ENCODE measurements at regions of chr2 and their contacts with region 1.

Region 1: DNA sequence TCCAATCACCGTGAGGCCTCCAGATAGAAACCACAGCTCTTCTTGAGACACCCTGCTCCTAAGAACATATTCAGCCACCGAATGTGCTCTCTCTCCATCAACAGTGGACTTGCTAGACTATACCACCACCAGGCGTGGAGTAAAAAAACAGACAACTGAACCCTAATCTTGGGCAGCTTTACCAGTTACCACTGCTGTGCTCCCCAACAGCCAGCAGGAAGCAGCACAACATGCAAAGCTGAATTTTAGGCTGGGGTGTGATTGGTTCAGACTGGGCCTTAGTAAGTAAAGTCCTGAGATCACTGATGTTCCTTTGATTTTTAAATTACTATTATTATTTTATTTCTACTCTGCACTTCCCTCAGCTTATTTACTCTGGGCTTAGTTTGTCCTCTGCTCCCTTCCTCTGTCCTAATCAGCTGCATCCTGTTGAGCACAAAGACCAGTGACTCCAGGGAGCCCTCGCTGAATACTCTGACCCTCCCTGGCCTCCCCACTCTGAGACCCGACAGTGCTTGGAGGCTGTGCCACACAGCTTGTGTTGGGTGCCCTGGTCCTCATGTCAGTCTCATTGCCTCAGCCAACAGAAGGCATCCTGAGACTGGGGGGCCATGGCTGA is 21.9 kb downstream of the MRPL35 start:
- DNase-seq: peak; percentile 53
- ATAC-seq: no peak

Region 2: GRCh38 chr2:86079981-86080911 is 140.9 kb before region 1 on chr2:
- intact Hi-C with region 1: no loop called
- DNase-seq: peak; percentile 84
- ATAC-seq: peak; percentile 88 to 89

Region 3: DNA sequence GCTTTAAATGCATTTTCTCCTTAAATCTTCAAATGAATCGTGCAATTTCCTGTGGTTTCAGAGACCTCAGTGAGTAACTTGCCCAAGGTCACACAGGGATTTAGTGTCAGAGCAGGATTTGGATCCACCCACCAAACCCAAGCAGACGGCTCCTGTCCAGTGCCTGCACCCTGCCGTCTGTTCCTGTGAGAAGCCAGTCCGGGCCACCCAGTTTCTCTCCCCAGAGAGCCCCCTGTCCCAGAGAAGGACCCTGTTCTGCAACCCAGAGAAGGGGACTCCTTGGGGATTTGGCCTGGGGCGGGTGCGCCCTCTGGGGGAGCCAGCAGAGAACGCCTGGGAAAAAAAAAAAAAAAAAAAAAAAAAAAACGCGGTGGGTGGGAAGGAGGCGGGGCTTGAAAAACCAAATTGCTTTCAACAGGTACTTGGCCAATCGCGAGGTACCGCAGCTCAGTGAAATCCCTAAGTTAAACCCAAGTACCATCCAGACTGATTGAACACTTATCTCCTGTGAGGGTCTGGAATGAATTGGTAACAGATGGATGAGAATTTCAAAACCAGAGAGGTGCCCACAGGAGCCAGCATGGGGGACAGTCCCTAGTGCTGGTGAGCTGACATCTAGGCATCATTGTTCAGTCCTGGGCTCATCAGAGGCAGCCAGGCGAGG is 147.1 kb after region 1 on chr2:
- intact Hi-C with region 1: loop called (anchors 1 to 10 kb)
- DNase-seq: peak; percentile 27
- ATAC-seq: peak; percentile 65 to 69

Region 4: DNA sequence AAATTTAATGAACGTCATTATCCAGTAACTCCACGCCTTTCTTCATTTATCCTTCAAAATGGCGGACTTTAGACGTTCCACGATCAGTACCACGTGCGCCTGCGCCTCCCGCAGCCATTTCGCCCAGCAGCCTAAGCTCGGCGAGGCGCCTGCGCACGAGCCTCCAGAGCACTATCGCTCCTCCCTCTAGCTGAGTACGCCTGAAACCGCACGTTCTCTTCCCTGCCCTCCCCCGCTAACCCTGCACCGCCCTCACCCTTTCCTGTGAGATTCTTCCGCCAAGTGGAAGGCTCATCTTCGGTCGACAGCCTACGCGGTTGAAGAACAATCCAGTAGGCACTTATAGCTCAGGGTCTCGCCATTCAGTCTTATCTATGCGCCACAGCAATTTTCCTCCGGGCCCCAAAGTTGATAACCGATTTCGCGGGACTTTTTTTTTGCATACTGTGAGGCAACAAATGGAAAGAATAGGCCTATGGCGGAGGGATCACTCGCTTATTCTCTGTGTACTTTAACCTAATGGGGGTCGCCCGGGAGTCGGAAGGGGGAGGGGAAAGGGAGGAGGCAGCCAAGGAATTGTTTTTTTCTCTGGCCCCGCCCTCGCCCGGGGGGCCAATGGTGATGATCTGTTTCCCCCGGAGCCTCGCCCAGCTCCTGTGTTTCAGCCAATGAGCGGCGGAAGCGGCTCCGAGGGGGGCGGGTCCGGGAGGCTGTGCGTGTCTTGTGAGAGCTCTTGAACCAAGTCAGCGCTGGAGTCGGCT is 219.6 kb after region 1 on chr2 and contains the start of gene KDM3A:
- intact Hi-C with region 1: loop called in 1 of 2 experiments (anchors 10 kb)
- DNase-seq: peak; percentile 99
- ATAC-seq: peak; percentile 95 to 96
- total RNA-seq, gene KDM3A: 35.5 to 45.9 TPM

Measured in left cardiac atrium (tissue), 4 donors.